PC-9 (cell line): ENCODE measurements at regions of chr12 and their contacts with region 1.

Region 1: GRCh38 chr12:77049767-77050353 is 15.5 kb downstream of the E2F7 start:
- DNase-seq: peak in 1 of 2 experiments; percentile 56
- H3K4me3 ChIP-seq: no peak overlapping the region
- H3K27ac ChIP-seq: no peak overlapping the region
- H3K4me1 ChIP-seq: no peaks in the 10 kb centered on the region
- H3K27me3 ChIP-seq: no peaks in the 10 kb centered on the region
- CTCF ChIP-seq: peak; percentile 87

Region 2: GRCh38 chr12:77685112-77685511 is 635.3 kb after region 1 on chr12:
- CTCF ChIA-PET with region 1: no interaction called
- POLR2A ChIA-PET with region 1: no interaction called
- intact Hi-C with region 1: loop called (anchors 5 kb)
- DNase-seq: peak in 1 of 2 experiments; percentile 46
- H3K4me3 ChIP-seq: no peak overlapping the region
- H3K27ac ChIP-seq: no peak overlapping the region
- H3K4me1 ChIP-seq: no peaks in the 10 kb centered on the region
- H3K27me3 ChIP-seq: no peaks in the 10 kb centered on the region
- CTCF ChIP-seq: peak; percentile 68